ENCODE measurements at regions of chr2 and their contacts with region 1.

Region 1: DNA sequence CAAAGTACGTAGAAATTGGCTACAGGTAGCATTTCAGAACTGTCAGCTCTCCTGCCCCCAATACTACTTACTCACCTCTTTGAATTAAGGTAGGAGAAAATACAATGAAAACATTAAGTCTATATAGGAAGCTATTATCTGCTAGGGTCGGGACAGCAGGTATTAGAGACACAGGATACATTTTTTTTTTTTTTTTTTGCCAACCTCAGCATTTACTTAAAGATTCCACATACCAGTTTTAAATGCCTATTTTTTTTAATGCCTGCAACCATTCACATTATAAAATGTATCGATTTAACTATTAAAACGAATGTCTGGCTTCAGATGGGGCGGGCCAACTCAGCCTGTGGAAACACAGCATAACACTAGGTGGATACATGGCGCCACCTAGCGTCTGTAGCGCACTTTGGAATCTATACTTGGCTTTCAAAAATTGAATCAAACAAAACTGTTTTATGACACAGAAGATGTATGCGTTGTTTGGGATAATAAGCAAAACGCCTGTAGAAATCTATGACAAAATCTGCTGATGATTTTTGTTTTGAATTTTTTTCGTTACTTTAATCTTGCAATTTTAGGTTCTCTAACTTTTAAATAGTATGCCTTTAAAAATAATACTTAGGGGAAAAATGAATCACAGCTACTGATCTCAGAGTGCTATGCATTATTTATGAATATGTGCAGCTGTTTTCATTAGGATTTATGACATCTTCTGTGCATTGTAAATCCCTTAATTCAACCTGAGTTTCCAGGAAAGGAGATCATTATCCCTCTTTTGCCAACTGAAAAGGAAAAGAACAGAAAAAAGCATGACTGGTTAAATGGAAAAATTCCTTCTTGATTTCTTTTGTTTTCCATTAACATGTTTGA is 261.0 kb downstream of the NYAP2 start:
- DNase-seq: peak; percentile 63
- ATAC-seq: peak; percentile 91
- H3K4me3 ChIP-seq: no peak overlapping the region
- H3K27ac ChIP-seq: no peak overlapping the region
- H3K4me1 ChIP-seq: no peaks in the 10 kb centered on the region
- H3K27me3 ChIP-seq: peaks cover 3% of the 10 kb centered on the region
- CTCF ChIP-seq: peak; percentile 93
- POLR2A ChIP-seq: no peak
- RAD21 ChIP-seq: peak; percentile 97

Region 2: GRCh38 chr2:224357098-224357901 is 1303.2 kb before region 1 on chr2:
- CTCF ChIA-PET with region 1: no interaction called
- POLR2A ChIA-PET with region 1: no interaction called
- dilution Hi-C with region 1: no loop called
- in situ Hi-C with region 1: no loop called
- intact Hi-C with region 1: loop called (anchors 1 kb)
- DNase-seq: peak; percentile 60
- ATAC-seq: peak; percentile 87
- H3K4me3 ChIP-seq: no peak overlapping the region
- H3K27ac ChIP-seq: no peak overlapping the region
- H3K4me1 ChIP-seq: no peaks in the 10 kb centered on the region; the same call in 1 of the 2 replicates
- H3K27me3 ChIP-seq: peaks cover 16% of the 10 kb centered on the region
- CTCF ChIP-seq: peak; percentile 85
- POLR2A ChIP-seq: no peak
- RAD21 ChIP-seq: peak; percentile 88

Region 3: GRCh38 chr2:224816816-224817215 is 843.7 kb before region 1 on chr2:
- CTCF ChIA-PET with region 1: no interaction called
- POLR2A ChIA-PET with region 1: no interaction called
- dilution Hi-C with region 1: no loop called
- in situ Hi-C with region 1: loop called (anchors 10 kb)
- intact Hi-C with region 1: no loop called
- DNase-seq: peak; percentile 89
- ATAC-seq: peak; percentile 80
- H3K4me3 ChIP-seq: no peak overlapping the region
- H3K27ac ChIP-seq: peak overlapping the region; percentile 30
- H3K4me1 ChIP-seq: peaks cover 12% of the 10 kb centered on the region
- H3K27me3 ChIP-seq: no peaks in the 10 kb centered on the region
- CTCF ChIP-seq: no peak
- POLR2A ChIP-seq: no peak
- RAD21 ChIP-seq: no peak

Region 4: DNA sequence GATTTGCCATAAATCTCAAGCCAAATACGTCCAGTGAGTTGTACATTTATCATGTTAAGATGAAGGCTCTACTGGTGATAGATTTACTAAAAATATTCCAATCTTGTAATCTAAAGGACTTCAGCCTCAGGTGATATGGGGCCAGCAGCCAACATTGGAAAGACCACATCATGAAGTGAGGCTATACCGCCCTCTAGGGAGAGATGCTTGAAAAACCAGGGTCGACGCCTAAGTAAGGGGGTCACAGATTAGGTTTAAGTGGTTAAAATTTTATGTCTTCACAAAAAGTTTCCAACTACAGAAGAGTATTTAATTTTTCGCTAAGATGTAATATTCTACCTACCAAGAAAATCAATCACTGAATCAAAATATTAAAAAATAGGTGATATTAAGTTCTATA is 651.6 kb before region 1 on chr2:
- CTCF ChIA-PET with region 1: no interaction called
- POLR2A ChIA-PET with region 1: no interaction called
- dilution Hi-C with region 1: no loop called
- in situ Hi-C with region 1: loop called (anchors 25 kb)
- intact Hi-C with region 1: loop called (anchors 1 kb)
- DNase-seq: no peak
- ATAC-seq: no peak
- H3K4me3 ChIP-seq: no peak overlapping the region
- H3K27ac ChIP-seq: no peak overlapping the region
- H3K4me1 ChIP-seq: peaks cover 13% of the 10 kb centered on the region
- H3K27me3 ChIP-seq: no peaks in the 10 kb centered on the region
- CTCF ChIP-seq: peak; percentile 33
- POLR2A ChIP-seq: no peak
- RAD21 ChIP-seq: peak; percentile 23; the same call in 1 of the 2 replicates

Region 5: GRCh38 chr2:225282858-225283710 is 377.4 kb before region 1 on chr2:
- CTCF ChIA-PET with region 1: interaction called, 11 read pairs
- POLR2A ChIA-PET with region 1: no interaction called
- dilution Hi-C with region 1: no loop called
- in situ Hi-C with region 1: no loop called
- intact Hi-C with region 1: loop called (anchors 1 kb)
- DNase-seq: peak; percentile 41
- ATAC-seq: peak; percentile 71; the same call in 1 of the 2 replicates
- H3K4me3 ChIP-seq: no peak overlapping the region
- H3K27ac ChIP-seq: no peak overlapping the region
- H3K4me1 ChIP-seq: no peaks in the 10 kb centered on the region
- H3K27me3 ChIP-seq: peaks cover 20% of the 10 kb centered on the region
- CTCF ChIP-seq: peak; percentile 65
- POLR2A ChIP-seq: no peak
- RAD21 ChIP-seq: peak; percentile 54

Region 6: DNA sequence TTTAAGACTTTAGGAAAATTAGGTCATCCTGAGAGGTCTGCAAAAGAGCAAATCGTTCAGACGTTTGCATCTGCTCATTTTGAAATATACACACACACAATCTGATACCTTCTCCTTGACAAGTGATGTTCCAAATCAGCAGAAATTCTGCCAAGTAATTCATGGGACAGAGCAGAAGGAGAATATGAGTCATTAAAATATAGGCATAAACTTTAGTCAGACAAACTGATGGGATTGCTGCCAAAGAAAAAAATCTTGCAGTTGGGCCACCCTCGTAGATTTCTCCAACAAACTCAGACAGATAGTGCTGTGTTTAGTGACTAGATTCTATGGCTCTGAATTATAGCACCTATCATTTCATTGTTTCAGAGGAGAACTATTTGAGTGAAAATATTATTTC is 75.3 kb after region 1 on chr2:
- CTCF ChIA-PET with region 1: no interaction called
- POLR2A ChIA-PET with region 1: no interaction called
- dilution Hi-C with region 1: no loop called
- in situ Hi-C with region 1: no loop called
- intact Hi-C with region 1: no loop called
- DNase-seq: peak; percentile 95
- ATAC-seq: peak; percentile 87
- H3K4me3 ChIP-seq: no peak overlapping the region
- H3K27ac ChIP-seq: no peak overlapping the region
- H3K4me1 ChIP-seq: peaks cover 2% of the 10 kb centered on the region
- H3K27me3 ChIP-seq: no peaks in the 10 kb centered on the region
- CTCF ChIP-seq: no peak
- POLR2A ChIP-seq: no peak
- RAD21 ChIP-seq: 0 out of 2 replicates have a peak, but pooled peaks have one; percentile 8

Region 7: DNA sequence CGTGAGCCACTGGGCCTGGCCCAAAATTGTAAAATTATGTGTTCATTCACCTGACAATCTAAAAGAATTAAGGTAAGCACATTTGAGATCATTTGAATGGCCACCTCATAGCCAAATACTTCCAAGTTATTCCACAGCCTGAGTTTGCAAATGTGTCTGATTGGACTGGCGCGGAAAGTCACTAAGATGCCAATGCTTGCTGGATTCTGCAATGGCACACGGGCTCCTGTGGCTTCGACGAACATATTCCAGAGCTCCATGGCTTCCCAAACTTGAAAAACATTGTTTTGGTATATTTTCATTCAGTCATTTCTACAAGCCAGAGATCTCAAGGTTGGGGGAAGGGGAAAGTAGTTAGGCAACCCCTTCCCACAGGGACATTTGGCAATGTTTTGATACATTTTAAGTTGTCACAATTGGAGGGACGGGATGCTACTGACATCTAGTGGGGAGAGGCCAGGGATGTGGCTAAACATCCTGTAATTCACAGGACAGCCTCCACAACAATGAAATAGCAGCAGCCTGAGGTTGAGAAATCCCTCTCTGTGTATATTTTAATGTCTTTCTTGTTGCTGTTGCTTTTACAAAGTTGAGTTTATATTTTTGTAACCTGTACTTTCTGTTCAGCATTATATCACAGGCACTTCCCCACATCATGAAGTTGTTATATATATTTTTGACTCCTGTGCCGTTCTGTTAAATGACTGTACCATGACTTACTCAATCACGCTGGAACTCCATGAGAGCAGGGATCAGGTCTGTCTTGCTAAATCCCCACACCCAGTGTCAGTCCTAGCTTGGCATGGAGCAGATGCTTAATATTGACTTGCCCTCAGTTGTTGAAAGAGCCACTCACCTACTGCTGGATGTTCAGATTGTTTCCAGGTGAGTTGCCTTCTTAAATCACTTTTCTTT is 1446.6 kb after region 1 on chr2:
- CTCF ChIA-PET with region 1: interaction called, 3 read pairs
- POLR2A ChIA-PET with region 1: no interaction called
- dilution Hi-C with region 1: no loop called
- in situ Hi-C with region 1: loop called (anchors 10 kb)
- intact Hi-C with region 1: loop called (anchors 1 kb)
- DNase-seq: peak; percentile 71
- ATAC-seq: peak; percentile 98
- H3K4me3 ChIP-seq: no peak overlapping the region
- H3K27ac ChIP-seq: no peak overlapping the region
- H3K4me1 ChIP-seq: no peaks in the 10 kb centered on the region
- H3K27me3 ChIP-seq: peaks cover 2% of the 10 kb centered on the region; the same call in 1 of the 2 replicates
- CTCF ChIP-seq: peak; percentile 93
- POLR2A ChIP-seq: no peak
- RAD21 ChIP-seq: peak; percentile 90

Measured in IMR-90 (cell line).